Calu3 (cell line): ENCODE measurements at regions of chr1 and their contacts with region 1.

Region 1: DNA sequence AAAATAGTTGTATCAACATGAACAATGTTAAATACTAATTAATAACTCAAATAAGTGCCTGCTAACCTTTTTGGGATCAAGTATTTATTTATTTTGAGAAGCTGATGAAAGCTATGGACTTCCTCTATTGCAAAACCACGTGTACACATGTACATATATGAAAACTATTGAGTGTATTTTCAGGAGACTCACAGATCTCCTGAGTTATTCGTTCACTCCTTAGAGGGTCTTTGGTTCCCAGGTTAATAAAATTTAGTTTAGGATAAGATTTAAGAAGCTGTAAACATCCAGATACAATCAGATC is 130.5 kb downstream of the DISC1 start:
- DNase-seq: no peak
- H3K4me3 Mint-ChIP-seq: no peak overlapping the region
- H3K27ac Mint-ChIP-seq: no peak overlapping the region
- H3K4me1 Mint-ChIP-seq: no peaks in the 10 kb centered on the region
- H3K27me3 Mint-ChIP-seq: no peaks in the 10 kb centered on the region
- CTCF ChIP-seq: no peak

Region 2: GRCh38 chr1:231376875-231377549 is 380.0 kb before region 1 on chr1:
- CTCF ChIA-PET with region 1: no interaction called
- intact Hi-C with region 1: no loop called
- DNase-seq: no peak
- H3K4me3 Mint-ChIP-seq: no peak overlapping the region
- H3K27ac Mint-ChIP-seq: peak overlapping the region; percentile 51
- H3K4me1 Mint-ChIP-seq: peaks cover 21% of the 10 kb centered on the region
- H3K27me3 Mint-ChIP-seq: no peaks in the 10 kb centered on the region
- CTCF ChIP-seq: no peak

Region 3: GRCh38 chr1:231702801-231703395 is 54.2 kb before region 1 on chr1:
- CTCF ChIA-PET with region 1: no interaction called
- intact Hi-C with region 1: no loop called
- DNase-seq: no peak
- H3K4me3 Mint-ChIP-seq: no peak overlapping the region
- H3K27ac Mint-ChIP-seq: no peak overlapping the region
- H3K4me1 Mint-ChIP-seq: no peaks in the 10 kb centered on the region
- H3K27me3 Mint-ChIP-seq: no peaks in the 10 kb centered on the region
- CTCF ChIP-seq: no peak

Region 4: GRCh38 chr1:231720652-231721325 is 36.3 kb before region 1 on chr1:
- CTCF ChIA-PET with region 1: no interaction called
- intact Hi-C with region 1: no loop called
- DNase-seq: no peak
- H3K4me3 Mint-ChIP-seq: no peak overlapping the region
- H3K27ac Mint-ChIP-seq: no peak overlapping the region
- H3K4me1 Mint-ChIP-seq: no peaks in the 10 kb centered on the region
- H3K27me3 Mint-ChIP-seq: no peaks in the 10 kb centered on the region
- CTCF ChIP-seq: no peak

Region 5: DNA sequence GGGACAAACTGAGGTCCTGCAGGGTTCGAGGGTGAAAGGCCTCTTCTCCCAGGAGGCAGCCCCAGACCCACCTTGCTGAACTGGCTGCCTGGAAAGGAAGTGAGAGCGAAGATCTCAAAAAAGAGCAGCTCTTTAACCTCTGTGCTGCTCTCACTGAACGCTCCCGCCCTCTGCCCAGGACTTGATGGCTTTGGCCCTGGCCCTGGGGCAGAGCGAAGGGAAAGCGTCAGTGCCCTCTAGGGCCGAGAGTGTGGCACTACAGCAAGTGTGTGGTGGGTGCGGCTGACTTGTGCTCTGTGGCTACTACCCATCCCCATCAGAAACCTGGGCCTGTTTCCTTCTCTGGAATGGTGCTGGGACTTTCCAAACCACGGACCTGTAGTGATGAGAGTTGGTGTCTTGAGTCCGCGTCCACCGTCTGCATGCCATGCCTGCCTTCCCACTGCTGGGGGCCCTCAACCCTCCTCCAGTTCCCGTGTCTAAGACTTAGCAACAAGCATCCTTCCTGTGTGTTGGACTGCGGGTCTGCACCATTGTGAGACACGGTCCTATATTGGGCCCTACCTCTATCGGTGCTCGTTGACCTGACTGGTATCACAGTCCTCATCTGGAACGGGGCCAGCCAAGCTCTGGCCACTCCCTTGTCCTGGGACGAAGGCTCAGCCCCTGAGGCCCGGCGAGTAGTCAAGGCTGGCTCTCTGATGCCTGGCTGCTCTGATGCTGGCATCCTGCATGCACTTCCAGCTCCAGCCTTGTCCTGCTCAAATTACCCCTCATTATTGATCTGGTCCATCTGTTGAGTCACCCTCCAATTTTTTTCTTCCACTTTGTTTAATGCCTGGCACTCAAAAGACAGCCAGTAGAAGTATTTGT is 49.8 kb after region 1 on chr1:
- CTCF ChIA-PET with region 1: interaction called, 13 read pairs
- intact Hi-C with region 1: loop called (anchors 1 kb)
- DNase-seq: peak; percentile 71
- H3K4me3 Mint-ChIP-seq: no peak overlapping the region
- H3K27ac Mint-ChIP-seq: no peak overlapping the region
- H3K4me1 Mint-ChIP-seq: peaks cover 9% of the 10 kb centered on the region
- H3K27me3 Mint-ChIP-seq: no peaks in the 10 kb centered on the region
- CTCF ChIP-seq: peak; percentile 63

Region 6: DNA sequence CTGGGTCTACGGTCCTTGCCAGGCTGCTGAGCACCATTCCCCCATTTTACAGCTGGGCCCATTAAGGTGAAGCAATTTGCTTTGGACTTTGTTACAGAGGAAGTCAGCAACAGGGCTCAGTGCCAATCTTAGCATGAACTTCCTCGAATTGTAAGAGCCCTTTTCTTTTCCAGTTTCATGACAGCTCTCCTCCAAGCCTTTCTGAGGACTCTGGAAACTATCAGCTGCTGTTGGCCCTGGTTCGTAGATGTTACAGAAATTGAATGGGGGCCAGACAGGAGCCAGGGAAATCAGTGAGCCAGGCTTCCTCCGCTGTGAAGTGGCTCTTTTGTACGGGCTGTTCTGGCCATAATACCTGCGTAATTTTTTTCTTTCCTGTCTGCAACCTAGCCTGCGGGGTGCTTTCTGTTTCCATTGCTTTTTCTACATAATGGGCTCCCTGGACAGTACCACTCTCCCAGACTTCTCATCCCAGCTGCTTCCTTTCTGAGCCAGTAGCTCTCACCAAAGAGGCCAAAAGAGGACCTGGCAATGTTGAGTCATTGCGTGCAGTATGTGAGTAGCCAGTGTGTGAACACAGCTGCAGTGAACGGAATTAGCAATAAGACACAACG is 255.8 kb after region 1 on chr1:
- CTCF ChIA-PET with region 1: no interaction called
- intact Hi-C with region 1: no loop called
- DNase-seq: peak; percentile 9
- H3K4me3 Mint-ChIP-seq: no peak overlapping the region
- H3K27ac Mint-ChIP-seq: no peak overlapping the region
- H3K4me1 Mint-ChIP-seq: peaks cover 20% of the 10 kb centered on the region
- H3K27me3 Mint-ChIP-seq: no peaks in the 10 kb centered on the region
- CTCF ChIP-seq: no peak